ENCODE measurements at regions of chr10 and their contacts with region 1.

Region 1: GRCh38 chr10:90893190-90893589 is 21.4 kb downstream of the RPP30 start:
- DNase-seq: no peak
- H3K4me3 ChIP-seq: no peak overlapping the region
- H3K27ac ChIP-seq: no peak overlapping the region
- H3K4me1 ChIP-seq: no peaks in the 10 kb centered on the region
- H3K27me3 ChIP-seq: no peaks in the 10 kb centered on the region
- CTCF ChIP-seq: no peak
- EP300 ChIP-seq: no peak
- POLR2A ChIP-seq: no peak
- RAD21 ChIP-seq: no peak

Region 2: DNA sequence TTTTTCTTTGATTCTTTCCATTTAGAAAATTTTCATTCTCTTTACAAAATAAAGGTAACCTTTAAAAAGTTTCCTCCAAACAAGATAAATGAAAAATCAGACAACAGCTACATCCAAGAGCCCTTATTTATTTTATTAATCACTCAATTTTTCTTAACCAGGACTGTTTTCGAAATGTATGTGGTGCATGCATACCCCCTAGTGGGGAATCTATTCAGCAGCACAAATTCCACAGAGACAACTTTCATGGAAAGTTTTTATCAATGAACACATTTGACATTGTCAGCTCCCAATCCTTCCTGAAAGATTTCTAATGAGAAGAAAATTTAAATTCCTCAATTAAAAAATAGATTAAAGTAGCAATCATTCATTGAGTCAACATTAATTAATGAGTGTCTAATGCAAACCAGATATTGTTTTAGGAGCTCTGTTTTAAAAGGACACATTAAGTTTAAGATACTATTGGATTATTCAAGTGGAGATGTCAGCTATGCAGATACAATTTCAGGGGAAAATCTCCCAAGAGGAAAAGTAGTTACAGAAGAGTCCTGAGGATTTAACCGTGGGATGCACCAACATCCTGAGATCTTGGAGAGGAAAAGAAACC is 30.2 kb before region 1 on chr10:
- CTCF ChIA-PET with region 1: no interaction called
- POLR2A ChIA-PET with region 1: no interaction called
- DNase-seq: no peak
- H3K4me3 ChIP-seq: no peak overlapping the region
- H3K27ac ChIP-seq: no peak overlapping the region
- H3K4me1 ChIP-seq: peaks cover 0 to 3% (median 0%) of the 10 kb centered on the region in 4 experiments; a peak in 2 of 7 replicates
- H3K27me3 ChIP-seq: no peaks in the 10 kb centered on the region
- CTCF ChIP-seq: peak in 2 of 3 experiments; percentile 54 to 61; a peak in 3 of 4 replicates
- EP300 ChIP-seq: no peak
- POLR2A ChIP-seq: no peak
- RAD21 ChIP-seq: peak; percentile 82 to 84

Region 3: GRCh38 chr10:90879062-90879461 is 14.1 kb before region 1 on chr10:
- CTCF ChIA-PET with region 1: interaction called, 20 read pairs
- POLR2A ChIA-PET with region 1: interaction called, 5 read pairs
- DNase-seq: no peak
- H3K4me3 ChIP-seq: no peak overlapping the region
- H3K27ac ChIP-seq: no peak overlapping the region
- H3K4me1 ChIP-seq: no peaks in the 10 kb centered on the region
- H3K27me3 ChIP-seq: no peaks in the 10 kb centered on the region
- CTCF ChIP-seq: no peak
- EP300 ChIP-seq: no peak
- POLR2A ChIP-seq: no peak
- RAD21 ChIP-seq: no peak

Region 4: DNA sequence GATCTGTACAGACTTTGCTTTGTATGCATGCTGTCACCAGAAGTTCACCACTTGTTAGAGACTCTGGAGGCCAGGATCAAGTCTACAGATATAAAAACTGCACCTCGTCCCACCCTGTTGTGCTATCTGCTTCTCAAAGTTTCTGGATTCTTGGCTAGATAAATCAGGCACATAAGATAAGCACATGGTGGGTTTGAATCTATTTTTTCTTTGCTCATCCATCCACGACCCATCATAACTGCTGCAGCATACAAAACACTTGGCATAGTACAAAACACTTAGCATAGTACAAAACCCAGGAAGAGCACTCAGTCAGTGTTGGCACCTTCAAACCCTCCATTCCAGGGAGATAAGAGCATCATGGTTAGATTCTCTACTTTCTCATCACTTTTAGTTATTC is 70.1 kb after region 1 on chr10:
- CTCF ChIA-PET with region 1: no interaction called
- POLR2A ChIA-PET with region 1: no interaction called
- DNase-seq: no peak
- H3K4me3 ChIP-seq: no peak overlapping the region
- H3K27ac ChIP-seq: no peak overlapping the region
- H3K4me1 ChIP-seq: no peaks in the 10 kb centered on the region
- H3K27me3 ChIP-seq: peaks cover 0 to 26% (median 8%) of the 10 kb centered on the region in 4 experiments; a peak in 4 of 7 replicates
- CTCF ChIP-seq: no peak
- EP300 ChIP-seq: no peak
- POLR2A ChIP-seq: no peak
- RAD21 ChIP-seq: no peak

Measured in H1 (cell line).